Endothelial cell of umbilical vein (primary cell): ENCODE measurements at regions of chrX and their contacts with region 1.

Region 1: DNA sequence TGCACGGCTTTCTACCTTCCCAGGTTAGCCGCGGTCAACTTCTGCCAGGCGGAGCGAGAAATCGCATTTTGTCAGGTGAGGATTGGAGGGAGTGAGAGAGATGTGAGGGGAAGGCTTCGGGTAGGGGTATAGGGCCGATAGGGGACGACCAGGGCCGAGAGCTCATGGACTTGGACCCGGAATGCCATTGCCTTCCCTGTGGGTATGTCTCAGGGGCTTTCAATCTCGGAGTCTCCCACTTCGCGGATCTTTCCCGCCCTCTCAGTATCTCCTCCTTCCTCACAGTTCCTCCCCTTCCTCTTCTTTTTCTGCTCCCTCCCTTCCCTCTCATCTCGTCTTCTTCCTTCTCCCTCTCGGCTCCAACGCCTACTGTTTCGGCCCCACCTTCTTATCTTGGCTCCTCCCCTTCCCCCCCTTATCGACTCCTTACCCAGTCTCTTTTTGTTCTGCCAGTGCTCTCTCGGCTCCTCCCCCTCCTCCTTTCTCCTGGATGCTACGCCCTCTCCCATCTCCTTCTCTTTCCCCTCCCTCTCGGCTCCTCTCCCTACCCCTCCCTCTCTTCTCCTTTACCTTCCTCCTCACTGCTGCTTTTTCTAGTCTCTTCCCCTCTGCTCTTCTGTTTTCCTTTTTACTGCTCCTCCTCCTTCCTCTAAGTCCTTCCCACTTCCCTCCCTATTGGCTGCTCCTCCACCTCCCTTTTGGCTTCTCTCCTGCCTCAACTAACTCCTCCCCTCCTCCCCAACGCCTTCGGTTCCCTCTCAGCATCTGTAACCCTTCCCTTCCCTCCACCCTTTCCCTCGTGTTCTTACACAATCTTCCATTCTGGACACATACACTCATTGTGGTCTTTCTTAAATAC is 29.4 kb upstream of the RBMX start:
- DNase-seq: peak; percentile 82
- H3K4me3 ChIP-seq: peak overlapping the region; percentile 46 to 86 (median 78)
- H3K27ac ChIP-seq: peak overlapping the region; percentile 32
- H3K4me1 ChIP-seq: peaks cover 6% of the 10 kb centered on the region
- H3K27me3 ChIP-seq: no peaks in the 10 kb centered on the region
- CTCF ChIP-seq: no peak
- POLR2A ChIP-seq: peak; percentile 57

Region 2: DNA sequence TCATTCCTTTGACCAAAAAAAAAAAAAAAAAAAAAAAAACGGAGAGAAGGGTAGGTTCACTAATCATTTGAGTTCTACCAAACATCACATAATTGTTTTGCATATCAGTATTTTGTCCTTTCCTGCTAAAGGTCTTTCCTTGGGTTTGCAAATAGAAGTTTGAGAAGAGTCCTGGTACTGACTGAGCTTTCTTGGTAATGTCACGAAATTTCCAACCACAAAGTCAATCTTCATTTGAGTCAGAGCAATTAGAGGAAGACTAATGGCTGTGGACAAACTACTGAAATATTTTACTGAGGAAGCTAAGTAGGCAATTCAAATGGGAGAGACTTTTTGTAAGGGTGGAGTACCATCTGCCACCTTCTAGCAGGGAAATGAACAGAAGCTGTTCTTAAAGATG is 283.7 kb before region 1 on chrX:
- CTCF ChIA-PET with region 1: no interaction called
- POLR2A ChIA-PET with region 1: no interaction called
- dilution Hi-C with region 1: no loop called
- intact Hi-C with region 1: no loop called
- DNase-seq: no peak
- H3K4me3 ChIP-seq: no peak overlapping the region
- H3K27ac ChIP-seq: no peak overlapping the region
- H3K4me1 ChIP-seq: no peaks in the 10 kb centered on the region
- H3K27me3 ChIP-seq: no peaks in the 10 kb centered on the region
- CTCF ChIP-seq: no peak
- POLR2A ChIP-seq: no peak

Region 3: GRCh38 chrX:136767104-136767941 is 142.6 kb before region 1 on chrX:
- CTCF ChIA-PET with region 1: no interaction called
- POLR2A ChIA-PET with region 1: no interaction called
- dilution Hi-C with region 1: no loop called
- intact Hi-C with region 1: loop called (anchors 5 kb)
- DNase-seq: peak; percentile 45
- H3K4me3 ChIP-seq: peak overlapping the region; percentile 35 to 68 (median 52)
- H3K27ac ChIP-seq: no peak overlapping the region
- H3K4me1 ChIP-seq: no peaks in the 10 kb centered on the region
- H3K27me3 ChIP-seq: no peaks in the 10 kb centered on the region
- CTCF ChIP-seq: peak in 1 of 2 donors; percentile 49
- POLR2A ChIP-seq: no peak